Naive thymus-derived CD4-positive, alpha-beta T cell (primary cell): ENCODE measurements at regions of chr1 and their contacts with region 1.

Region 1: DNA sequence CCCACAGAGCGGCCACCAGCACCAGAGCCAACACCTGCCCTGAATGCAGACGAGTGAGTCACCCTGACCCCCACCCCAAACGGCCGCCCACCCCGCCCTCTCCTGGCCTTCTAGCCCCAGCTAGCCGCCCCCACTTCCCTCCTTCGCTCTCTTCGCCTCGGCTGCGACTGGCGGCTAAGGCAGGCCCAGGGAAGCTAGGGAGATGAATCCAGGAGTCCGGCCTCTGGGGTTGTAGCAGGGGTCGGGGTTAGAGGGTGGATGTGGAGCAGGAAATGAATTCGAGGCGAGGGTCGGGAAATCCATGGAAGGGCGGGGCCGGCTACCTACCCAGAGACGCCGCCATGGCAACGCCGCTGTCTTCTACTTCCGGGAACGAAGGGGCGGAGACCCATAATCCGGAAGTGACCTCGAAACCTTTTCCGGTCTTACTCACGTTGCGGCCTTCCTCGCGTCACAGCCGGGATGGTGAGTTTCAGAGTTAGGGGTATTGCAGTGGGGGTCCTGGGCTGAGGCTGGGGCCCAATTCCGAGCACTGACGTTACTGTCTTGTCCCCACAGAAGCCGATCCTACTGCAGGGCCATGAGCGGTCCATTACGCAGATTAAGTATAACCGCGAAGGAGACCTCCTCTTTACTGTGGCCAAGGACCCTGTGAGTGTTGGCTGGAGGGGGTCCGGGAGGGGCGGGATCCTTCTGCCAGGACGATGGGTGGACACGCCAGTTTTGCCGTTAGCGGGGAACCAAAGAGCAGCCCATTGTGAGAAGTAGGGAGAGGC is at the starts of genes EIF3I and TMEM234:
- DNase-seq: peak; percentile 71 to 94 (median 89)
- ATAC-seq: peak; percentile 95
- H3K4me3 ChIP-seq: peak within 1 kb of the TSS; percentile 99
- H3K4me3 Mint-ChIP-seq: peak within 1 kb of the TSS; percentile 90 to 98 (median 97)
- H3K27ac ChIP-seq: peak within 1 kb of the TSS; percentile 99
- H3K27ac Mint-ChIP-seq: peak within 1 kb of the TSS; percentile 94 to 99 (median 98)
- H3K4me1 ChIP-seq: peaks cover 23 to 24% of the 10 kb centered on the region in 2 donors
- H3K4me1 Mint-ChIP-seq: peaks cover 14 to 57% (median 37%) of the 10 kb centered on the region in 7 donors
- H3K27me3 ChIP-seq: no peaks in the 10 kb centered on the region
- H3K27me3 Mint-ChIP-seq: no peaks in the 10 kb centered on the region
- total RNA-seq, gene EIF3I: 82.6 to 182 (median 104) TPM
- total RNA-seq, gene TMEM234: 15.9 to 29.6 (median 21.4) TPM

Region 2: DNA sequence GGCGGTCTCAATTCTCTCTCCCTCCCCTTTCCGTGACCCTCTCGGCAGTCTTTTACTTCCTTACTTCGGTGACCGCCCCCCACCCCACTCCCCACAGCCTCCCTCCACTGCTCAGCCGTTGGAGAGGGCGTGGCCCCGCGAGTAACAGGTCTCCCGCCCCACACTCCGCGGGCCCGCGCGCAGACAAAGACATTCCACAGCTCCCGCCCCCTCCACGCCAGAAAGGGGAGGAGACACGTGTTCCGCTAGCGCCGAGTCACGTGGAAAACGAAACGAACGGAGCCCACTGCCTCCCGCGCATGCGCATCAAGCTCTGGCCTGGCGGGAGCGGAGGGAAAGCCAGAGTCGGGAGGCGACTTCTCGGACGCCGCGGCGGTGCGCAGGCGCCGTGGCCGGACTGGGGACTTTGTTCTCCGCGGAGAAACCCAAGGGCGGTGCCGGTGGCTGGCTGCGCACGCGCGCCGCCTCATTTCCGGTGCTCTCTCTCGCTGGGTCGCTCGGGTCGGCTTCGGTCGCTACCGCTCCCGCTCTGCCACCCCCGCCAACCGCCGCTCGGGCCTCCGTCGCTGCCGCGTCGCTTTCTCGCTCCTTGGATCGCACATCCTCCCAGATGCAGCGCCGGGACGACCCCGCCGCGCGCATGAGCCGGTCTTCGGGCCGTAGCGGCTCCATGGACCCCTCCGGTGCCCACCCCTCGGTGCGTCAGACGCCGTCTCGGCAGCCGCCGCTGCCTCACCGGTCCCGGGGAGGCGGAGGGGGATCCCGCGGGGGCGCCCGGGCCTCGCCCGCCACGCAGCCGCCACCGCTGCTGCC is 208.6 kb before region 1 on chr1 and contains the start of gene KHDRBS1:
- CTCF ChIA-PET with region 1: no interaction called
- POLR2A ChIA-PET with region 1: no interaction called
- intact Hi-C with region 1: no loop called
- DNase-seq: peak; percentile 94 to 99 (median 98)
- ATAC-seq: peak; percentile 93
- H3K4me3 ChIP-seq: peak within 1 kb of the TSS; percentile 98
- H3K4me3 Mint-ChIP-seq: peak within 1 kb of the TSS; percentile 89 to 98 (median 96)
- H3K27ac ChIP-seq: peak within 1 kb of the TSS; percentile 96
- H3K27ac Mint-ChIP-seq: peak within 1 kb of the TSS; percentile 90 to 99 (median 97)
- H3K4me1 ChIP-seq: peaks cover 10 to 14% of the 10 kb centered on the region in 2 donors
- H3K4me1 Mint-ChIP-seq: peaks cover 17 to 45% (median 31%) of the 10 kb centered on the region in 7 donors
- H3K27me3 ChIP-seq: no peaks in the 10 kb centered on the region
- H3K27me3 Mint-ChIP-seq: peaks cover 0 to 2% (median 0%) of the 10 kb centered on the region in 5 donors
- total RNA-seq, gene KHDRBS1: 89.2 to 162 (median 125) TPM

Region 3: GRCh38 chr1:32063261-32063681 is 158.9 kb before region 1 on chr1:
- CTCF ChIA-PET with region 1: no interaction called
- POLR2A ChIA-PET with region 1: no interaction called
- intact Hi-C with region 1: no loop called
- DNase-seq: peak in 6 of 9 donors; percentile 12 to 46 (median 35)
- ATAC-seq: peak; percentile 60
- H3K4me3 ChIP-seq: no peak overlapping the region
- H3K4me3 Mint-ChIP-seq: no peak overlapping the region
- H3K27ac ChIP-seq: no peak overlapping the region
- H3K27ac Mint-ChIP-seq: peak overlapping the region in 8 of 9 donors; percentile 8 to 79 (median 68)
- H3K4me1 ChIP-seq: peaks cover 4 to 5% of the 10 kb centered on the region in 2 donors
- H3K4me1 Mint-ChIP-seq: peaks cover 10 to 19% (median 12%) of the 10 kb centered on the region in 7 donors
- H3K27me3 ChIP-seq: no peaks in the 10 kb centered on the region
- H3K27me3 Mint-ChIP-seq: no peaks in the 10 kb centered on the region

Region 4: DNA sequence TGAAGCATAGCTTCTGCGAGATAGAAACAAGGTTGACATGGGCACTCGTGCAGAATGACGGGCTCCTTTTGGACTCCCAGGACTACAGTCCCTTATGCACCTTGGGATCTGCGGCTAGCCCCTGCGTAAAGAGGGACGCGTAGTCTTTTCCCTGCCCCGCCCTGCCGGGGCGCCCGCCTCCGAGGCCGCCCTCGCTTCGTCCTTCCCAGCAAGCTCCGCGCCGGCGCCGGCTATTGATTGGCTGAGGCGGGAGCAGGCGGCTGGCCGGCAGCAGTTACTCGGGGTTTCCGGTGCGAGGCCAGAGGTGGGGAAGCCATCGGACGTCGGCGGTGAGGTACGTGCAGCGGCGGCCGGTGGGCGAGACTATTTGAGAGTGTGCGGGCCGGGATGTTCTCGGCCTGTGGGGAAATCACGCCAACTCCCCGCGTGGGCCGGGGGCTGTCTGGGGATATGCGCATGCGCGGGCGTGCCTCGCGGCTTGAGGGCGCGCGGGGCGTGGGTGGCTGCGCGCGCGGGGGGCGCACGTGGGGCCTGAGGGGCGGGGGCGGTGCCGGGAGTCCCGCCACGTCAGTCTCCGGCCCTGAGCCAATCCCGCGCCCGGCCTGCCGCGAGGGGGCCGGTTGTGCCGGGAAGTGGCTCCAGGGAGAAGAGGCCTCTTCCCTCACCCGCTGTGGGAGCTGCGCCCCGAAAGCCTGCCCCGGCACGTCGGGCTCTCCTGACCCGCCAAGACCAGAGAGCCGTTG is 42.6 kb before region 1 on chr1 and contains the start of gene TXLNA:
- CTCF ChIA-PET with region 1: no interaction called
- POLR2A ChIA-PET with region 1: no interaction called
- intact Hi-C with region 1: loop called in 1 of 2 experiments (anchors 1 kb)
- DNase-seq: peak; percentile 80 to 93 (median 86)
- ATAC-seq: peak; percentile 91
- H3K4me3 ChIP-seq: peak within 1 kb of the TSS; percentile 89
- H3K4me3 Mint-ChIP-seq: peak within 1 kb of the TSS; percentile 86 to 94 (median 91)
- H3K27ac ChIP-seq: peak within 1 kb of the TSS; percentile 89
- H3K27ac Mint-ChIP-seq: peak within 1 kb of the TSS; percentile 84 to 98 (median 92)
- H3K4me1 ChIP-seq: peaks cover 17 to 21% of the 10 kb centered on the region in 2 donors
- H3K4me1 Mint-ChIP-seq: peaks cover 22 to 45% (median 38%) of the 10 kb centered on the region in 7 donors
- H3K27me3 ChIP-seq: no peaks in the 10 kb centered on the region
- H3K27me3 Mint-ChIP-seq: no peaks in the 10 kb centered on the region
- total RNA-seq, gene TXLNA: 16.7 to 83.3 (median 36.3) TPM

Region 5: DNA sequence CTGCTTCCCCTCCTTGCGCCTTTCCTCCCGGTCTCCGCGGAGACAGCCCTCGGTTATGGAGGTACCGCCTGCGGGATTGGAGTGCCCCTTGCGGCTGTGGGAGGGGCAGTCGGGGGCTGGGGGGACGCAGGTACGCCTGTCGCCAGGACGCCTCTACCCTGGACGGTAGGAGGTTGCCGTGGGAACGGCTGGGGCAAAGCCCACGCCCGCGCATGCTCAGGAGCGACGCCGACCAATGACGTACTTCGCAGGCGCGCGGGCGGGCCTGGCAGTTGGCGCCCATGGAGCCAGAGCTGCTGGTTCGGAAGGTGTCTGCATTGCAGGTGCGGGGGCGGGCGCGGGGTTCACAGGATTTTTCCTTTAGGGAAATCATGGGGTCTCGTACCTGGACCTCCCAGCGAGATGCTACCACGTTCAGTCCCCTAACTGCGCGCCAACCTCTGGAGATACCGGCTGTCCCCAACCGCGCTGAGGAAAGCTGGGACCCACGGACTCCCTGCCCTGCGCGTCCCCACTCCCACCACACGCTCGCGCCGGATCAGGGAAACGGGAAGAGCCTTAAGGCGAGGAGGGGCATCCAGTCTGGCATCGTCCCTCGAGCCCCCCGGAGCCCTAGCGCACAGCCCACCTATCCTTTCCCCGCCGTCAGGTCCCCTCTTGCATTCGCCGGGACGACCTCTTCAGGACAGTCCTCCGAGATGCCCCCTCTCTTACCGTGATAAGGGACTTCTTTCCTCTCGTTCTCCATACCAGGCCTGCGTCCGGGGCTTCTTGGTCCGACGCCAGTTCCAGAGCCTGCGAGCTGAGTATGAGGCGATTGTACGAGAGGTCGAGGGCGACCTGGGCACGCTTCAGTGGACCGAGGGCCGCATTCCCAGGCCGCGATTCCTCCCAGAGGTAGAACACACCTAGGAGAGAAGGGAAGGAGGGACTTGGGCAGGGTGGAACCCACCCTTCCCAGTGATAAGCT is 16.5 kb before region 1 on chr1 and contains the start of gene IQCC:
- CTCF ChIA-PET with region 1: no interaction called
- POLR2A ChIA-PET with region 1: interaction called, 5 read pairs
- intact Hi-C with region 1: loop called (anchors 1 kb)
- DNase-seq: peak; percentile 77 to 89 (median 83)
- ATAC-seq: peak; percentile 77
- H3K4me3 ChIP-seq: peak within 1 kb of the TSS; percentile 81
- H3K4me3 Mint-ChIP-seq: peak within 1 kb of the TSS; percentile 80 to 91 (median 88)
- H3K27ac ChIP-seq: peak within 1 kb of the TSS; percentile 80
- H3K27ac Mint-ChIP-seq: peak within 1 kb of the TSS; percentile 42 to 95 (median 86)
- H3K4me1 ChIP-seq: peaks cover 18 to 28% of the 10 kb centered on the region in 2 donors
- H3K4me1 Mint-ChIP-seq: peaks cover 17 to 45% (median 33%) of the 10 kb centered on the region in 7 donors
- H3K27me3 ChIP-seq: no peaks in the 10 kb centered on the region
- H3K27me3 Mint-ChIP-seq: no peaks in the 10 kb centered on the region
- total RNA-seq, gene IQCC: 2.3 to 4.6 (median 2.5) TPM

Region 6: GRCh38 chr1:32247983-32248889 is 26.1 kb after region 1 on chr1:
- CTCF ChIA-PET with region 1: interaction called, 32 read pairs
- POLR2A ChIA-PET with region 1: interaction called, 10 read pairs
- intact Hi-C with region 1: loop called (anchors 1 to 2 kb)
- DNase-seq: peak; percentile 43 to 84 (median 56)
- ATAC-seq: peak; percentile 45
- H3K4me3 ChIP-seq: peak overlapping the region; percentile 52
- H3K4me3 Mint-ChIP-seq: peak overlapping the region; percentile 66 to 100 (median 98)
- H3K27ac ChIP-seq: peak overlapping the region; percentile 91
- H3K27ac Mint-ChIP-seq: peak overlapping the region; percentile 92 to 100 (median 99)
- H3K4me1 ChIP-seq: peaks cover 37 to 51% of the 10 kb centered on the region in 2 donors
- H3K4me1 Mint-ChIP-seq: peaks cover 32 to 60% (median 52%) of the 10 kb centered on the region in 7 donors
- H3K27me3 ChIP-seq: no peaks in the 10 kb centered on the region
- H3K27me3 Mint-ChIP-seq: peaks cover 0 to 2% (median 0%) of the 10 kb centered on the region in 5 donors

Region 7: GRCh38 chr1:32351399-32352238 is 129.5 kb after region 1 on chr1:
- CTCF ChIA-PET with region 1: no interaction called
- POLR2A ChIA-PET with region 1: no interaction called
- intact Hi-C with region 1: loop called in 1 of 2 experiments (anchors 1 kb)
- DNase-seq: peak; percentile 83 to 93 (median 92)
- ATAC-seq: peak; percentile 97
- H3K4me3 ChIP-seq: peak overlapping the region; percentile 62
- H3K4me3 Mint-ChIP-seq: peak overlapping the region; percentile 68 to 90 (median 85)
- H3K27ac ChIP-seq: peak overlapping the region; percentile 75
- H3K27ac Mint-ChIP-seq: peak overlapping the region; percentile 63 to 96 (median 91)
- H3K4me1 ChIP-seq: peaks cover 4 to 19% of the 10 kb centered on the region in 2 donors
- H3K4me1 Mint-ChIP-seq: peaks cover 35 to 65% (median 53%) of the 10 kb centered on the region in 7 donors
- H3K27me3 ChIP-seq: no peaks in the 10 kb centered on the region
- H3K27me3 Mint-ChIP-seq: peaks cover 0 to under 1% (median 0%) of the 10 kb centered on the region in 5 donors

Region 8: GRCh38 chr1:32557812-32558211 is 335.6 kb after region 1 on chr1:
- CTCF ChIA-PET with region 1: no interaction called
- POLR2A ChIA-PET with region 1: no interaction called
- intact Hi-C with region 1: no loop called
- DNase-seq: no peak
- ATAC-seq: no peak
- H3K4me3 ChIP-seq: no peak overlapping the region
- H3K4me3 Mint-ChIP-seq: no peak overlapping the region
- H3K27ac ChIP-seq: no peak overlapping the region
- H3K27ac Mint-ChIP-seq: no peak overlapping the region
- H3K4me1 ChIP-seq: no peaks in the 10 kb centered on the region
- H3K4me1 Mint-ChIP-seq: no peaks in the 10 kb centered on the region
- H3K27me3 ChIP-seq: no peaks in the 10 kb centered on the region
- H3K27me3 Mint-ChIP-seq: peaks cover 0 to 18% (median 0%) of the 10 kb centered on the region in 5 donors